Head of caudate nucleus (tissue), 42 donors: ENCODE measurements at regions of chr16 and their contacts with region 1.

Region 1: GRCh38 chr16:31440516-31441184 is 1.9 kb downstream of the ZNF843 start:
- DNase-seq: peak in 5 of 42 donors; percentile 8 to 44 (median 28)

Region 2: DNA sequence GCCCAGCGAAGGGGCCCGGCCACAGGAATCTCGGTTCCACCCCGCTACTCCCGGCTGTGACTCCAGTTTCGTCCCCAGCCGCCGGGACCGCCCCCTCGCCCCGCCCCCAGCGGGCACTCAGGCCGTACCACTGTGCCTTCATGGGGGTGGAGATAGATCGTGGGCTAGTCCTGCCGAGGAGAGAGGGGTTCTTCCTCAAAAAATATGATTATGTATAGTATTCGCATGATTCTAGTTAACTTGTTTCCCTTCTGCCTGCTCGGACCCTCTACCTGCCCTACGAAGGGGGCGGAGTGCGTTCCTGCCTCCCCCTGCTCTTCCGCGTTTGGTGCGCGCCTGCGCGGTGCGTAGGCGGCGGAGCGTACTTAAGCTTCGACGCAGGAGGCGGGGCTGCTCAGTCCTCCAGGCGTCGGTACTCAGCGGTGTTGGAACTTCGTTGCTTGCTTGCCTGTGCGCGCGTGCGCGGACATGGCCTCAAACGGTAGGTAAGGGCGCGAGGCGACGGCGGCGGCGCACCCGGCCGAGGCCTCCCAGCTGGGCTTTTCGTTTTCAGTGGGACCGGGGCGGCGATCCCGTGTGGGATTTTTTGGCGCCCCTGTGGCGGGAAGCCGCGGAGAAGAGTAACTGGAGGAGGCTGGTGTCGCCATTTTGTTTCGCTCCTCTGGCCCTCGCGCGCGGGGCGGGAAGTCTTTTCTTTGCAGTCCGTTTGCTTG is 260.7 kb before region 1 on chr16 and contains the start of gene FUS:
- intact Hi-C with region 1: loop called (anchors 10 kb)
- DNase-seq: peak; percentile 80 to 97 (median 93)

Region 3: DNA sequence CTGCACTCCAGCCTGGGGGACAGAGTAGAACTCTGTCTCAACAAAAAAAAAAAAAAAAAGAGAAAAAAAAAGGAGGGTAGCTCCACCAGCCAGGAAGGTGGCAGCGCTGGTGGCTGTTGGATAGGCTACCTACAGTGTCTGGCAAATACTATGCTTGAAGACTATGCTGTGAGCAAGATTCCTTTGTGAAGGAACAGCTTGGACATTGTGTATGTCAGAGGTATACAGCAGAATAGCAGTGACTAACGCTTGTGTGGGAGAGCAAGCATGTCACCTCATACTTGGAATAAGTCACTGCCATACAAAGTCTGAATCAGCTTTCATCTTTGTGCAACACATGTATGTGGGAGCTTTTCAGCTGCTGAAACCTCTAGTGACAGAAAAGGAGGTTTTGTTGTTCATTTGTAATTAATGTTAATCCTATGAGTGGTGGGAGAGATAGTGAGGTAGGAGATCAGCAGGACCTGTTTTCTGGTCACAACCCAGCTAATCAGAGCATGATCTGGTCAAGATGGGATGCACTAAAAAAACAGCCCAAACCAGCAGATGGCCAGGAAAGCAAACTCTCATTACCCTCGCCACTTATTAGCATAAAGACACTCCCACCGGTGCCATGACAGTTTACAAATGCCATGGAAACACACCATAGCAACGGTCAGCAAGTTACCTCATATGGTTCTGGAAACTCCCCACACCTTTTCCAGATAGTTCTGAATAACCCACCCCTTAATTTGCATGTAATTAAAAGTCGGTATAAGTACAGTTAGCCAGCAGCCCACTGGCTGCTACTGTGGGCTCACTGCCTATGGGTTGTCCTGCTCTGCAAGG is 54.3 kb before region 1 on chr16:
- intact Hi-C with region 1: no loop called
- DNase-seq: peak in 22 of 42 donors; percentile 15 to 82 (median 44)